Endothelial cell of umbilical vein (primary cell): ENCODE measurements at regions of chr9 and their contacts with region 1.

Region 1: DNA sequence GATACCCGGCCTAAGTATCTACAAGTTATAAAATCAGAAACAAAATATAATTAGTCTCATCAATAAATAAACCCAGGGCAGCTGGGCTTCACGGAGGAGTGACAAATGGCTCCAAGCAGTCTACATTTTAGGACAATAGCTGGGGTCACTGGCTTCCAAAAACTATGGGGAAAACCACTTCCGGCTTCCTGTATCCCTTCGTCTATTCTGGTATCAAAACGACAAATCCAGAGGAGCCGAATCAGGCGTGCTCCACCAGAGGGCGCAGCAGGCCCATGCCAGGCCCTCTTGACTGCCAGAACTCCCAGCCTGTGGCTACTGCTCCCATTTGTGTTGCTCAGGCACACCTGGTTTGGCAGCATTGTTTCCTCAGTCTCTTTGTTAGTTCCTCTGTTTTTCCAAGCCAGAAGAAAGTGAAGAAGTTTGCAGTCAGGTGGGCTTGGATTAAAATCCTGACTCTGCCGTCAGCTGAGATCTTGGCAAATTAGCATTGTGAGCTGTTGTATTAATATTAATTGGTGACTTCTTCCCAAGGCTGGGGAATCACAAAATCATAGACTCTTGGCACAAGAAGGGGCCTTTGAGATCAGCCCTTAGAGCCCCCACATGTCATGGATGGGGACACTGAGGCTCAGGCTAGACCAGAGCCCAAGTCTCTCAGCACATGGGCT is 11.6 kb upstream of the RAB14 start:
- DNase-seq: peak; percentile 84
- H3K4me3 ChIP-seq: no peak overlapping the region
- H3K27ac ChIP-seq: no peak overlapping the region
- H3K4me1 ChIP-seq: peaks cover 5% of the 10 kb centered on the region
- H3K27me3 ChIP-seq: no peaks in the 10 kb centered on the region
- CTCF ChIP-seq: peak; percentile 96 to 98
- POLR2A ChIP-seq: no peak

Region 2: GRCh38 chr9:121267689-121268597 is 54.7 kb after region 1 on chr9 and contains the start of gene GSN:
- CTCF ChIA-PET with region 1: interaction called, 31 read pairs
- POLR2A ChIA-PET with region 1: no interaction called
- dilution Hi-C with region 1: no loop called
- intact Hi-C with region 1: no loop called
- DNase-seq: peak; percentile 68
- H3K4me3 ChIP-seq: peak within 1 kb of the TSS; percentile 51 to 86 (median 81)
- H3K27ac ChIP-seq: no peak within 1 kb of the TSS
- H3K4me1 ChIP-seq: peaks cover 16% of the 10 kb centered on the region
- H3K27me3 ChIP-seq: peaks cover 0 to 2% of the 10 kb centered on the region in 2 experiments
- CTCF ChIP-seq: no peak
- POLR2A ChIP-seq: no peak
- total RNA-seq, gene GSN: 130 and 176 TPM in 2 replicates

Region 3: DNA sequence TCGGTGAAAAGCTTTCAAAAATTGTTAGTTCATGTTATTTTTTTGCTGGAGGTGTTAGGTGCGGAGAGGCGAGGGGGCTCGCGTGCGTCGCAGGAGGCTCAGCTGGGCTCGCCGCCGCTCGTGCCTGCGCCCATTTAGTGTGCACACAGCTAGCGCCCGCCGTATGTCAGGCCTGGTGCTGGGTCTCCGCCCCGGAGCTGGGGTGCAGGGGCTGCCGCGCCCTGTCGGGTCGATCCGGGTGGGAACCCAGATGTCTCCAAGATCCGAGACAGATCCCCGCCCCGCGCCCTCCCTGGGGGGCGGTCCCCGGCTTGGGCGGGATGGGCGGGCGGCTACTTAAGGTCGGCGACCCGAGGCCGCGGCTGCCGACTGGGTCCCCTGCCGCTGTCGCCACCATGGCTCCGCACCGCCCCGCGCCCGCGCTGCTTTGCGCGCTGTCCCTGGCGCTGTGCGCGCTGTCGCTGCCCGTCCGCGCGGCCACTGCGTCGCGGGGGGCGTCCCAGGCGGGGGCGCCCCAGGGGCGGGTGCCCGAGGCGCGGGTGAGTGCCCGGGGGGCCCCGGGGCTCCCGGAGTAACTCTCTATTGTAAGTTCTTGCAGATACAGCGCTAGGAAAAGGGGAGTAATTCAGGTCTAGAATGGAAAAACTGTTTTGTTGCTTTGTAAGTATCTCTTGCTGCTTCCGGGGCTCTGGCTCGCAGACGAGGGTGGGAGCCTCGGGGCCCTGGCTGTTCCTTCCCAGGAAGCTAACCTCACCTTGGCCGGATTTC is 86.4 kb after region 1 on chr9:
- CTCF ChIA-PET with region 1: interaction called, 13 read pairs
- POLR2A ChIA-PET with region 1: no interaction called
- dilution Hi-C with region 1: no loop called
- intact Hi-C with region 1: no loop called
- DNase-seq: peak; percentile 41
- H3K4me3 ChIP-seq: peak overlapping the region; percentile 41 to 52 (median 44)
- H3K27ac ChIP-seq: no peak overlapping the region
- H3K4me1 ChIP-seq: peaks cover 15% of the 10 kb centered on the region
- H3K27me3 ChIP-seq: no peaks in the 10 kb centered on the region
- CTCF ChIP-seq: no peak
- POLR2A ChIP-seq: peak; percentile 31

Region 4: DNA sequence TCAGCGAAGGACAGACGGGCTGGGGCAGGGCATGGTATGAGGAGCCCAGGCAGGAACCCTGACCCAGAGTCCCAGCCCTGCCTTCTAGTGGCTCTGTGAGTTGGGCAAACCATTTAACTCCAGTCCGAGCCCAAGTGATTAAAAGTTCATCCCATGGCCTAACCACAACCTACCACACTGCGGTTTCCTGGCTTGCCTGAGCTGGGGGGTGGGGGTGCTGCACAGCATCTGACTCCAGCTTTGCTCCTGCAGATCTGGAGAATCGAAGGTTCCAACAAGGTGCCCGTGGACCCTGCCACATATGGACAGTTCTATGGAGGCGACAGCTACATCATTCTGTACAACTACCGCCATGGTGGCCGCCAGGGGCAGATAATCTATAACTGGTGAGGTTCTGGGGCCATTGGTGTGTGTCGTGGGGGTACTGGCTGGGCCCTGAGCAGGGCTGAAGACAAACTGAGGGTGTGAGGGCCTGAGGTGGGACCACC is 107.8 kb after region 1 on chr9:
- CTCF ChIA-PET with region 1: interaction called, 57 read pairs
- POLR2A ChIA-PET with region 1: no interaction called
- dilution Hi-C with region 1: no loop called
- intact Hi-C with region 1: loop called (anchors 1 kb)
- DNase-seq: no peak
- H3K4me3 ChIP-seq: no peak overlapping the region
- H3K27ac ChIP-seq: peak overlapping the region; percentile 9
- H3K4me1 ChIP-seq: peaks cover 22% of the 10 kb centered on the region
- H3K27me3 ChIP-seq: no peaks in the 10 kb centered on the region
- CTCF ChIP-seq: no peak
- POLR2A ChIP-seq: no peak

Region 5: GRCh38 chr9:121439711-121440664 is 226.7 kb after region 1 on chr9:
- CTCF ChIA-PET with region 1: interaction called, 24 read pairs
- POLR2A ChIA-PET with region 1: no interaction called
- dilution Hi-C with region 1: no loop called
- intact Hi-C with region 1: no loop called
- DNase-seq: peak; percentile 33
- H3K4me3 ChIP-seq: no peak overlapping the region
- H3K27ac ChIP-seq: no peak overlapping the region
- H3K4me1 ChIP-seq: no peaks in the 10 kb centered on the region
- H3K27me3 ChIP-seq: peaks cover 23 to 37% of the 10 kb centered on the region in 2 experiments
- CTCF ChIP-seq: peak in 1 of 2 donors; percentile 20
- POLR2A ChIP-seq: no peak